ENCODE measurements at regions of chr12 and their contacts with region 1.

Region 1: DNA sequence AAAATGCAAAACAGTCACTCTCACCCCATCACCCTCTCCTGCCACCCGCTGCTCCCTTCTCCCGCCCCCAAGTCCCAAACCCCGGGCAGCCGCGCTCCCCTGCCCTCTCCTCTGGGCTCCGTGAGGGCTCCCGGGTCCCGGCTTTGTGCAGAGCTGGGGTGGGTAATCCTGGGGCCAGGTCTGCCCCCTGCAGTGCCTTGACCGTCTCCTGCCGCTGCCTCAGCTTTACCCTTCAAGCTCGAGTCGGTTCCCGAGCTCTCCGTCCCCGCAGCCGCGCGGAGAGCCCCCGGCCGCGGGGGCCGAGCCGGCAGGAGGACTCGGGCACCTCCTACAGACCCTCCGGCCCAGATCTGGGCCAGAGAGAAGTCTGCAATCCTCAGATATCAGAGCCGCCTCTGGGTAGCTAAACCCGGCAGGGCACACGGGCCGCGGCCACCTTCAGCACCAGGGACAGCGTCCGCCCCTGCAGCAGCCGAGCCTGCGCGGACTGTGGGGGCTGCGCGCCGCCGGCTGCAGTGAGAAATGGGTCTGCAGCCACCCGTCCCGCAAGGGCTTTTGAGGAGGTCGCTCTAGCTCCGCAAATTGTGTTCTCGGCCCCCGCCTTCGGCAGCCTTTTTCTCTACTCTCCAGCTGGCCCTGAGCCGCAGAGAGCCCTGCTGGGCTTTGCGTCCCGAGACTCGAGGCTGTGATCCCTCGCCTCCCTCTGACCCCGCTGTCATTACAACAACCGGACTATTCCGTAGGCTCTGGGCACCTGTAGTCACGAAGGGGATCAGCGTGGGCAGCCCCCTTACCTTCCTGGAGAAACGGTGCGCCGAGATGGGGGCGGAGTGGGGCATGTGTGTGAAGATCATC is 1.2 kb downstream of the PRMT8 start:
- DNase-seq: peak; percentile 77

Region 2: DNA sequence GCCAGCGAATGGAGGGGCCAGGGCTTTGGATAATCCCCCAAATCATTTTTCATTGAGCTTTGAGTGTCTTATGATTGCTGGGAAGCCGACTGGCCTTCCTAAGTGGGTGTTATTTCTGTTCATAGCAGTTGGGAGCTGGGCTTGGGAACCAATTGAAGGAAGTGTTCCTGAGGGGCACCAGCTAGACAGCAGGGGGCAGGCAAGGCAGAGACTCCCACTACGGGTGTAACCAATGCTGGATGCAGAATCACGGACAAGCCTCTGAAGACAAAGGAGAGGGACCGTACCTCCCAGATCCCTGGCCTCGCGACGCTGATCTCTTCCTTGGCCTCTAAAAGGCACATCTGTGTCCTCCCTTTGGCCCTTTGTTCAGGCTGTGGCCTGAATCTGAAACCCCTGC is 150.1 kb before region 1 on chr12:
- intact Hi-C with region 1: loop called (anchors 10 kb)
- DNase-seq: no peak